Dendritic cell treated with granulocyte-macrophage colony-stimulating factor and Interleukin-4, amounts not matched to agents 40 ng/mL and 50 ng/mL, for 4 days (primary cell): ENCODE measurements at regions of chr1 and their contacts with region 1.

Region 1: GRCh38 chr1:107870696-107871095 is 94.3 kb downstream of the VAV3 start:
- H3K4me3 Mint-ChIP-seq: no peak overlapping the region
- H3K27ac Mint-ChIP-seq: no peak overlapping the region
- H3K4me1 Mint-ChIP-seq: peaks cover 33% of the 10 kb centered on the region
- H3K27me3 Mint-ChIP-seq: no peaks in the 10 kb centered on the region

Region 2: GRCh38 chr1:107835151-107835670 is 35.5 kb before region 1 on chr1:
- intact Hi-C with region 1: loop called (anchors 5 kb)
- H3K4me3 Mint-ChIP-seq: no peak overlapping the region
- H3K27ac Mint-ChIP-seq: no peak overlapping the region
- H3K4me1 Mint-ChIP-seq: peaks cover 55% of the 10 kb centered on the region
- H3K27me3 Mint-ChIP-seq: no peaks in the 10 kb centered on the region